Gastrocnemius medialis (tissue), 4 donors: ENCODE measurements at regions of chr20 and their contacts with region 1.

Region 1: GRCh38 chr20:44080646-44081267 is 106.2 kb downstream of the JPH2 start:
- DNase-seq: peak; percentile 43 to 57
- ATAC-seq: peak; percentile 59 to 79
- H3K4me3 ChIP-seq: no peak overlapping the region
- H3K27ac ChIP-seq: no peak overlapping the region
- H3K4me1 ChIP-seq: peaks cover 12 to 16% of the 10 kb centered on the region in 2 donors
- H3K27me3 ChIP-seq: no peaks in the 10 kb centered on the region
- CTCF ChIP-seq: peak; percentile 92 to 97 (median 94)
- POLR2A ChIP-seq: no peak

Region 2: DNA sequence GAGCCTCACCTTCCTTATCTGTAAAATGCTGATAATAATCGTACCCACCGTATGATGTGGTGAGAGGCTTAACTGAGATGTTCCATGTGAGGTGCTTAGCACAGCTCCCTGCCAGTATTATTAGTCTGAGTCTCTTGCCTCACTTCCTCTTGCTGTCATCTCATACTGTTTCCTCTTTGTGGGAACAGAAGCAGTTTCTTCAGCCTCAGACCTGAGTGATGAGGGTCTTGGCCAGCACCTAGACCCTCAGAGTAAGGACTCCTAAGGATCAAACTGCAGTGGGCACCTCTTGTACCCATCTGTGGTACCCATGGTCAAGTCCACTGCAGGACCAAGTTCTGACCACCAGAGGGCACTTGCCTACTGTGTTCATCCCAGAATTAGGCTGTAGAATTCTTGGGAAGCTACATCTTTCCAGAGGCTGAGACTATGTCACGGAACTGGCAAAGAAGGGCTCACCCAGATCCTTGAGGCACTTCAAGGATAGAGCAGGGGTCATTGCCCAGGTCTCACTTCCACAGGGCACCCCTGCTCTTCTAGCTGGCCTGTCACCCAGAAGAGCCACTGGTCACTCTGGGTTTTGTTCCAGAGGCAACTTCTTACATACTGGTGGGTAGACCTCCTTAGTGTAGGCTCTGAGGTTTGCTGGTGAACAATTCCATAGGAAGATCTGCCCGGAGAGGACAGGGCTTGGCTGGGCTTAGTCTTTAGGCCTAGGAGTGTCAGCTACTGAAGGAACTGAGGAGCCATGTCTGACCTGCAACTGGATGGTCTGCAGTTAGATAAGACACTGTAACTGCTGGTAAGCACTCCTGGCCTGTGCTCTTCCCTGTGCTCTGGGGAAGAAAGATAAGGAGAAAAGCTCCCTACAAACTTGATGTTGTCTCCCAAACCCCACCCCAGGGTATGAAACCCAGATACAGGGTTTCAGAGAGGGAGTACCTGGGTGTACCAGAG is 542.6 kb before region 1 on chr20:
- in situ Hi-C with region 1: loop called in 3 of 4 experiments (anchors 25 kb)
- intact Hi-C with region 1: loop called (anchors 1 kb)
- DNase-seq: peak in 1 of 2 donors; percentile 17
- ATAC-seq: peak in 1 of 2 donors; percentile 41
- H3K4me3 ChIP-seq: no peak overlapping the region
- H3K27ac ChIP-seq: no peak overlapping the region
- H3K4me1 ChIP-seq: no peaks in the 10 kb centered on the region
- H3K27me3 ChIP-seq: no peaks in the 10 kb centered on the region
- CTCF ChIP-seq: peak; percentile 42 to 87 (median 69)
- POLR2A ChIP-seq: no peak